CD14-positive monocyte (primary cell): ENCODE measurements at regions of chr2 and their contacts with region 1.

Region 1: DNA sequence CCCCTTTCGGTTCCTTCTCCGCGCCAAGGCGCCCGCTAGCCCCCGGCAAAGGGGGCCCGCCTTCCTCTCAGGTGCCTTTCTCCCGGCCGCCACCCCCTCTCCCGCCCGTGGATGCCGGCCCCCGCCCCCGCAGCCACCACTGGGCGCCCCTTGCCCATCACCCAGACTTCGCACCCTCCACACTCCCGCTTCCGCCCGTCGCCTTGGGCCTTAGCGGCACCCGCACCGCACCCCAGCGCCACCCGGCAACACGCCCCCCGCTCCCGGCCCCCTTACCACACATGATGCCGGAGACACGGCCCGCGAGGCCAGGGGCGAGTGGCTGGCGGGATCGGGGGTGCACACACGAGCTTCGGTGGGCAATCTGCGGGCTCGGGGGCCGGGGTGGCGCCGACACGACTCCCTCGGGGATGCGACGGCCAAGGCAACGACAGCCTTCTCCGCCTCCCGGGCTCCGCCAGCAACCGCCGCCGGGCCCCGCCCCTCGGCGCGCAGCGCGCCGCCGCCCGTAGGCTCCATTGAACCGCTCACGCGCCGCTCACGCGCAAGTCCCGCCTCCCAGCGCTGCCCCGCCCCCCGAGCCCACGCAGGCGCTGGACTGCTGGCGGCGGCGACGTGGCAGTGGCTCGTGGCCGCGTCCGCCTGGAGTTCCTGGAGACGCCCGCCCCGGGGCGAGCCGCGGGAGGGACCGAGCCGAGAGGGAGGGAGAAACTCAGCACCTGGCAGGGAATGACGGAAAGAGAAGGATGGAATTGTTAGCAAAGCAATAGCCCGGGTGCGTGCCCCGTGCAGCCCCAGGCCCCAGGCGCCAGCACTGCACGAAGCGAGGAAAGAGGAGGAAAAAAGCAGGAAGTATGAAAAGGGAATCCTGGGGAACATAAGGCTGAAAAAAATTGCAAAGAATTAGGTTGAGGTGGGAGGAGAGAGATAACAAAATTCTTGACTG is at the start of gene GFPT1:
- DNase-seq: peak; percentile 88 to 89 (median 89)
- H3K4me3 ChIP-seq: peak within 1 kb of the TSS; percentile 73 to 90 (median 86)
- H3K4me3 Mint-ChIP-seq: peak within 1 kb of the TSS; percentile 87 to 95
- H3K27ac ChIP-seq: peak within 1 kb of the TSS; percentile 67 to 86
- H3K27ac Mint-ChIP-seq: peak within 1 kb of the TSS; percentile 88 to 96 (median 93)
- H3K4me1 ChIP-seq: peaks cover 31 to 36% of the 10 kb centered on the region in 2 donors
- H3K4me1 Mint-ChIP-seq: peaks cover 56% of the 10 kb centered on the region
- H3K27me3 ChIP-seq: no peaks in the 10 kb centered on the region
- H3K27me3 Mint-ChIP-seq: peaks cover 0 to 2% (median 0%) of the 10 kb centered on the region in 3 donors
- CTCF ChIP-seq: no peak
- polyA plus RNA-seq, gene GFPT1: 3.6 to 4.5 (median 3.7) TPM

Region 2: DNA sequence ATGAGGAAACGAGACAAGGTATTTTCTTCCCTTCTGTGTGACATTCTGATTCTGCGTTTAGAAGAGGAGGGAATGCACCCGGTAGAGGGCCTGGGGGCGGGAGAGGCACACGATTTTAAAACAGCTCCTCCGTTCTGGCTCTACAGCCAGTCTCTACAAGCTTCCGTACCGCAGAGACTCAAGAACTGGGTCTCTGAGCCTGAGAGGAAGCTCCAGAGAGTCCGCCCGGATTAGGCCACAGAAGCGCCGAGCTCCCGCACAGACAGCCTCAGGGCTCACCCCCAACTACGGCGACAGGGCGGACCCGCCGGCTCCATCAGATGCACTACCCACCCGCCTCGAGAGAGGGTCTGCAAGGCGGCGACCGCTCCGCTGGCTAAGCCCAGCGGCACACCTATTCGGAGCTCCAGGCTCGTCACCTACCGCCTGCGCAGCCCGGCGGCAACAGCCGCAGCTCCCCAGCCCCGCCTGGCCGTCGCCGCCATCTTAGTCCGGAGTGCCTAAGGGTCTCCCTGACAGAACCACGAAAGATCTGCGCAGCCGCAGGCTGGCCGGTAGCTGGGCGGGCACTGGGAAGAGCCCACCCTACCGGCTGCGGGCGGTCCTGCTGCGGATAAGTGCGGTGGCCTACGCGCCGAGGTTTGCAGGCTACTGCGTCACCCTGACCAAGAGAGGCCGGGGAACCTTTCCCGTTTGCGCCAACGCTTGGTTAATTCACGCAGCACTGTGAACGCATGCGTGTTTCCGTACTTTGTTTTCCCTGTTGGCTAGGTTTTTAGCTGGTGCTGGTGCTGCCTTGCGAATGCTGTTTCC is 50.1 kb after region 1 on chr2 and contains the start of gene NFU1:
- intact Hi-C with region 1: loop called (anchors 5 kb)
- DNase-seq: peak; percentile 91 to 95 (median 91)
- H3K4me3 ChIP-seq: peak within 1 kb of the TSS; percentile 58 to 84 (median 60)
- H3K4me3 Mint-ChIP-seq: peak within 1 kb of the TSS; percentile 93 to 99
- H3K27ac ChIP-seq: peak within 1 kb of the TSS; percentile 96 to 97
- H3K27ac Mint-ChIP-seq: peak within 1 kb of the TSS; percentile 96 to 100 (median 98)
- H3K4me1 ChIP-seq: peaks cover 25 to 31% of the 10 kb centered on the region in 2 donors
- H3K4me1 Mint-ChIP-seq: peaks cover 38% of the 10 kb centered on the region
- H3K27me3 ChIP-seq: no peaks in the 10 kb centered on the region
- H3K27me3 Mint-ChIP-seq: no peaks in the 10 kb centered on the region
- CTCF ChIP-seq: peak; percentile 61
- polyA plus RNA-seq, gene NFU1: 10.5 to 56.1 (median 43.0) TPM

Region 3: DNA sequence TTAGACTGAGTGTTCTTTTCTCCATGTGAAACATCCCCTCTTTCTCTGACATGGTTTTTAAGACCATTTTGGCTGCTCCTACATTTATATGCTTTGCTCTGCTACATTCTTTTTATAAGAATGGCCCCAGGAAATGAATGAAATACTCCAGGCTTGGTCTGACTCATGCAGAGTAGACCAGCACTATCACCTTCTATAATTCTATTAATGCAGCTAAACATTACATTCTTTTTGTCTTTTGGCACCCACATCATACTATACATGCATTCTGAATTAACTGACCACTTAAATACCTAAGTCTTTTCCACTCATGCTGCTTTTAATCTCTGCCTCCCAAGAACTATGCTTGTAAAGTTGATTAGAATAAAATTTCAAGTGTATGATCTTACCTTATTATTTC is 162.4 kb after region 1 on chr2:
- intact Hi-C with region 1: no loop called
- DNase-seq: no peak
- H3K4me3 ChIP-seq: no peak overlapping the region
- H3K4me3 Mint-ChIP-seq: no peak overlapping the region
- H3K27ac ChIP-seq: peak overlapping the region in 1 of 2 donors; percentile 17
- H3K27ac Mint-ChIP-seq: peak overlapping the region in 1 of 7 donors; percentile 36
- H3K4me1 ChIP-seq: peaks cover 19 to 29% of the 10 kb centered on the region in 2 donors
- H3K4me1 Mint-ChIP-seq: peaks cover 43% of the 10 kb centered on the region
- H3K27me3 ChIP-seq: no peaks in the 10 kb centered on the region
- H3K27me3 Mint-ChIP-seq: no peaks in the 10 kb centered on the region
- CTCF ChIP-seq: no peak

Region 4: DNA sequence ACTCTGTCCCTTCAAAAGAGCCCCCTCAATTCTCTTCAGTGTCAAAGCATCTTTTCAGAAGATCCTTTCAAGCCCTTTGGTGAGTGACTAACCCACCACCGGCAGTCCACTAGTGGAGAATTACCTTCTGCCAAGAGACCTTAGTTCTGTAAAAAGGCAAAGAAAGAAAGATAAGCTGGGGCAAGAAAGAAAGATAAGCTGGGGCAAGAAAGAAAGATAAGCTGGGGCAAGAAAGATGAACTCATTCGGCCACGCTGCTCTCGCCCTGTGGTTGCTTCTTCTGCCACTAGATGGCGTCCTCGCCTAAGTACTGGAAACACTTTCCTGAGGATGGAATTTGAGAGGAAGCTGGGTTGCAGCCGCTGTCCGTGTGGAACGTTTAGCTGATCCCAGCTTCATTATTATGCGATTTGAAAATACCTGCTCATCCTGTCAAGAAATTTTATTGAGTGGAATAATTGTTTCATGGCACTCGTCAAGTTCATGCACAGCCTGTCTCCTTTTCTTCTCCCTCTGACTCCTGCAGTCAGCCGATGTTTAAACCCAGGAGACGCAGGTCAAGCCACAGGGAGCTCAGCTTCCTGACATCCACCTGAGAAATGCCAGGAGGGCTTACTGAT is 337.6 kb after region 1 on chr2:
- intact Hi-C with region 1: loop called in 1 of 2 experiments (anchors 10 kb)
- DNase-seq: peak; percentile 69 to 77 (median 76)
- H3K4me3 ChIP-seq: peak overlapping the region in 2 of 3 experiments; percentile 4 to 46
- H3K4me3 Mint-ChIP-seq: peak overlapping the region; percentile 67 to 84
- H3K27ac ChIP-seq: no peak overlapping the region
- H3K27ac Mint-ChIP-seq: peak overlapping the region in 1 of 7 donors; percentile 45
- H3K4me1 ChIP-seq: peaks cover 3% of the 10 kb centered on the region in 2 donors
- H3K4me1 Mint-ChIP-seq: peaks cover 6% of the 10 kb centered on the region
- H3K27me3 ChIP-seq: no peaks in the 10 kb centered on the region
- H3K27me3 Mint-ChIP-seq: peaks cover 0 to 6% (median 3%) of the 10 kb centered on the region in 3 donors
- CTCF ChIP-seq: peak; percentile 91

Region 5: DNA sequence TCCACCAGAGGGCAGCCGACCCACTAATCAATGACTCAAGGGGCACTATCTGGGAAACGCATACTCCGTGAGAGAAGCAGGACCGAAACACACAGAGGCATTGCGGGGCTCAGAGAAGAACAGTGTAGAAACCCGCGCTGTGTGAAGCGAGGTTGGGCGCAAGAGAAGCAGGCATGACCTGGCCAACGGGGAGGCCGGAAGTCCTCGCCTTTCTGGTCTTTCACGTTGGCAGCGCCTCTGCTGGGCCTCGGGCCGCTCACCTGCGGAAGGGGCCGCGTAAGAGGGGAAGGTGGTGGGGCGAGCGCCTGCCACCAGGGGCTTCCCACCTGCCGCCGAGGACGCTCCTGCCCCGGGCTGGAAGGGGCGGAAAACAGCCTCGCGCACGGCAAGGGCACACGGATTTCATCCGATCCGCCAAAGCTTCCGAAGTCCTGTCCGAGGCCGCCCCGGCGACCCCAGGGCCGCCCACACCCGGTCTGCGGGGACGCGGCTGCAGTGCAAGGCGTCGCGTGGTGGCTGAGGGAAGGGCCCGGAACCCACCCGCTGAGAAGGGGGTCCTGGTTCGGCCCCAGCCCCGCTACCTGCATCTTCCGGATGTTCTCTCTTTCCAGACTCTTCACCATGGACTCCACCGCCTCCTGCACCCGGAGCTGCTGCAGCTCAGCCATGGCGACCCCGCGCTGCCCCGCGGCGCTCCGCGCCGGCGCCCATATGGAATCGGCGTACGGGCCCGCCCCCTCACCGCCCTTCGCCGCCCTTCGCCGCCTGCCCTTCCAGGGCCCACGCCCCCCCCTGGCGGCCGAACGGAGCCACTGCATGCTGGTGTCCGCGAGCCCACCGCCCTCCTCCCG is 914.5 kb after region 1 on chr2 and contains the start of gene FAM136A:
- intact Hi-C with region 1: loop called in 1 of 2 experiments (anchors 5 kb)
- DNase-seq: peak; percentile 73 to 78 (median 74)
- H3K4me3 ChIP-seq: peak within 1 kb of the TSS; percentile 66 to 93 (median 89)
- H3K4me3 Mint-ChIP-seq: peak within 1 kb of the TSS; percentile 93 to 96
- H3K27ac ChIP-seq: peak within 1 kb of the TSS; percentile 52 to 78
- H3K27ac Mint-ChIP-seq: peak within 1 kb of the TSS in 6 of 7 donors; percentile 68 to 91 (median 88)
- H3K4me1 ChIP-seq: peaks cover 6 to 8% of the 10 kb centered on the region in 2 donors
- H3K4me1 Mint-ChIP-seq: peaks cover 13% of the 10 kb centered on the region
- H3K27me3 ChIP-seq: no peaks in the 10 kb centered on the region
- H3K27me3 Mint-ChIP-seq: peaks cover 0 to 6% (median 1%) of the 10 kb centered on the region in 3 donors
- CTCF ChIP-seq: peak; percentile 94
- polyA plus RNA-seq, gene FAM136A: 26.1 to 31.8 (median 30.1) TPM